ENCODE measurements at regions of chr4 and their contacts with region 1.

Region 1: DNA sequence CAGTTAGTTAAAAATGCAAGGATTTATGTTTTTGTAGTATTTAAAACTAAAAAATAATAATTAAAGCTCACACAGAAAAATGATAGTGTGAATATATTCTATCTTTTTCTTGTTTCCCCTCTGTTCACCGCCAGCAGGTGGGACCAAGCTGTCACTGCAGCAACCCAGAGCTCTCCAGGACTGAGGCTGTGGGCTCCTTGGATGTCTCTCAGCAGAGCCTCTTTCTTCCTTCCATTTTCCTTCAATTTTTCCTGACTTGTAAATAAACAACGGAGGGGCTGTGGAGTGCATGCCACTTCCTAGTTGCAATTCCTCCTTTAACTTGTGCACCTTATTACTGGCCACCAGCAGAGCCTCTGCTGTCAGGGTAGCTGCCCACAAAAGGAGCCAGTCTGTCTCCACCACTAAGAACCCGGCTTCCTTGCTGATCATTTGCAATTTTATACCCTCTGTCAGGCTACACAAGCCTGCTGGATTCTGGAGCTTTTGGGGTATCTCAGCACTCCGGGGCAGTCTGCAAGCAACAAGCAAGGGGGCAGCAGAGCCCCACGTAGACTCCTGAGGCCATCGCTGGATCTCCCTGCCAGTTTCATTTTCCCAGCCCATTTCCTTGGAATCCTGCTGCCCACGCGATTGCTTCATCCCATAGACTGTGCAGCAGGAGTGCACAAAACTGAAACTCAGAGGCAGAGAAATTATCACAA is 1467.4 kb downstream of the C4orf33 start:
- DNase-seq: peak; percentile 70
- H3K4me3 Mint-ChIP-seq: peak overlapping the region; percentile 67
- H3K27ac Mint-ChIP-seq: no peak overlapping the region
- H3K4me1 Mint-ChIP-seq: peaks cover 23% of the 10 kb centered on the region
- H3K27me3 Mint-ChIP-seq: no peaks in the 10 kb centered on the region
- CTCF ChIP-seq: peak; percentile 43

Region 2: GRCh38 chr4:130368668-130369067 is 194.7 kb before region 1 on chr4:
- CTCF ChIA-PET with region 1: no interaction called
- intact Hi-C with region 1: loop called (anchors 10 kb)
- DNase-seq: no peak
- H3K4me3 Mint-ChIP-seq: no peak overlapping the region
- H3K27ac Mint-ChIP-seq: no peak overlapping the region
- H3K4me1 Mint-ChIP-seq: no peaks in the 10 kb centered on the region
- H3K27me3 Mint-ChIP-seq: no peaks in the 10 kb centered on the region
- CTCF ChIP-seq: no peak

Region 3: GRCh38 chr4:130808492-130808891 is 245.2 kb after region 1 on chr4:
- CTCF ChIA-PET with region 1: interaction called, 9 read pairs
- intact Hi-C with region 1: loop called (anchors 1 kb)
- DNase-seq: no peak
- H3K4me3 Mint-ChIP-seq: no peak overlapping the region
- H3K27ac Mint-ChIP-seq: no peak overlapping the region
- H3K4me1 Mint-ChIP-seq: no peaks in the 10 kb centered on the region
- H3K27me3 Mint-ChIP-seq: no peaks in the 10 kb centered on the region
- CTCF ChIP-seq: peak; percentile 32

Region 4: DNA sequence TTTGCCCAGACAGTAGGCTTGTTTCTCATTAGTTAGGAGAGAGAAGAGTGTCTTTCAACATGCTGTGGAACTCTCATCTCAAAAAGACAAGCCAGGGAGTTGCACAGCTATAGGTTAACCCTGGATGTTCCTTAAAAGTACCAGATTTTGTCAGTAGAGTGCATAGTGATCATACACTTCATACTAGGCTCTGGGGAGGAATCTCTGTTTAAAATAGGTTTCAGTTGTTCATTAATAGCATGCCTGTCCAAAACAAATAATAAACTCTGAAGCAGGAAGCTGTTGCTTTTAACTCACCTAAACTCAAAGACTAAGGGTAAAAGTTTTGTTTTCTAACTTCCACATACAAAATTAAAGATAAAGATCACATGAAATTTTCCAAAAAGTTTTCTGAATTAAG is 481.0 kb after region 1 on chr4:
- CTCF ChIA-PET with region 1: no interaction called
- intact Hi-C with region 1: loop called (anchors 10 kb)
- DNase-seq: no peak
- H3K4me3 Mint-ChIP-seq: no peak overlapping the region
- H3K27ac Mint-ChIP-seq: no peak overlapping the region
- H3K4me1 Mint-ChIP-seq: no peaks in the 10 kb centered on the region
- H3K27me3 Mint-ChIP-seq: no peaks in the 10 kb centered on the region
- CTCF ChIP-seq: no peak